ENCODE measurements at regions of chr1 and their contacts with region 1.

Region 1: GRCh38 chr1:222643938-222644635 is 26.2 kb downstream of the MIA3 start:
- DNase-seq: peak; percentile 91 to 99 (median 97)
- ATAC-seq: peak; percentile 88 to 92
- H3K4me3 Mint-ChIP-seq: peak overlapping the region; percentile 83 to 100 (median 96)
- H3K27ac Mint-ChIP-seq: peak overlapping the region; percentile 92 to 100 (median 99)
- H3K4me1 Mint-ChIP-seq: peaks cover 5 to 44% (median 35%) of the 10 kb centered on the region in 4 donors
- H3K27me3 Mint-ChIP-seq: no peaks in the 10 kb centered on the region

Region 2: GRCh38 chr1:222589462-222590302 is 54.4 kb before region 1 on chr1 and contains the start of gene TAF1A:
- POLR2A ChIA-PET with region 1: interaction called, 15 read pairs
- DNase-seq: peak; percentile 74 to 95 (median 84)
- ATAC-seq: peak; percentile 99
- H3K4me3 Mint-ChIP-seq: peak within 1 kb of the TSS; percentile 92 to 99 (median 98)
- H3K27ac Mint-ChIP-seq: peak within 1 kb of the TSS; percentile 94 to 100 (median 98)
- H3K4me1 Mint-ChIP-seq: peaks cover 16 to 55% (median 48%) of the 10 kb centered on the region in 4 donors
- H3K27me3 Mint-ChIP-seq: no peaks in the 10 kb centered on the region
- polyA plus RNA-seq, gene TAF1A: 2.7 to 5.8 (median 5.5) TPM

Region 3: DNA sequence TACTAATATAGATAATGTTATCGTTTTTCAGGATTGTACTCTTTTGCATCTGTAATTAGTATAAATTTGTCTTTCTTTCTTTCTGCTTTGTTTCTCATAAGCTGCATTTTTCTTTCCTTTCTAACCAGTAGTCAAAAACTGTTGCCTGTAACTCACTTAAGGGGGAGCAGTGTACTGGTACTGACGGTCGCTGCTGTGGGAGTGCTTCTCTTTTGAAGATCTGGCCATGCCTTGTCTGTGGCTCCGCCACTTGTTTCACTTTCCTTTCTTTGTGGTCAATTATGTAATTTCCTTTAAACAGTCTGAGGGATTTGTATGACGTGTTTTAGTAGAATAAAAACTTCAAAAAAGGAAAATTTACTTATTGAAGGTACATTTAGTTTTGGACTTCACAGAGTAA is 10.8 kb after region 1 on chr1:
- POLR2A ChIA-PET with region 1: interaction called, 39 read pairs
- DNase-seq: peak; percentile 48 to 89 (median 81)
- ATAC-seq: peak; percentile 98 to 99
- H3K4me3 Mint-ChIP-seq: peak overlapping the region; percentile 22 to 82 (median 68)
- H3K27ac Mint-ChIP-seq: peak overlapping the region; percentile 88 to 97 (median 95)
- H3K4me1 Mint-ChIP-seq: peaks cover 34 to 67% (median 63%) of the 10 kb centered on the region in 4 donors
- H3K27me3 Mint-ChIP-seq: no peaks in the 10 kb centered on the region

Measured in naive thymus-derived CD8-positive, alpha-beta T cell (primary cell).